A549 (cell line): ENCODE measurements at regions of chr17 and their contacts with region 1.

Region 1: DNA sequence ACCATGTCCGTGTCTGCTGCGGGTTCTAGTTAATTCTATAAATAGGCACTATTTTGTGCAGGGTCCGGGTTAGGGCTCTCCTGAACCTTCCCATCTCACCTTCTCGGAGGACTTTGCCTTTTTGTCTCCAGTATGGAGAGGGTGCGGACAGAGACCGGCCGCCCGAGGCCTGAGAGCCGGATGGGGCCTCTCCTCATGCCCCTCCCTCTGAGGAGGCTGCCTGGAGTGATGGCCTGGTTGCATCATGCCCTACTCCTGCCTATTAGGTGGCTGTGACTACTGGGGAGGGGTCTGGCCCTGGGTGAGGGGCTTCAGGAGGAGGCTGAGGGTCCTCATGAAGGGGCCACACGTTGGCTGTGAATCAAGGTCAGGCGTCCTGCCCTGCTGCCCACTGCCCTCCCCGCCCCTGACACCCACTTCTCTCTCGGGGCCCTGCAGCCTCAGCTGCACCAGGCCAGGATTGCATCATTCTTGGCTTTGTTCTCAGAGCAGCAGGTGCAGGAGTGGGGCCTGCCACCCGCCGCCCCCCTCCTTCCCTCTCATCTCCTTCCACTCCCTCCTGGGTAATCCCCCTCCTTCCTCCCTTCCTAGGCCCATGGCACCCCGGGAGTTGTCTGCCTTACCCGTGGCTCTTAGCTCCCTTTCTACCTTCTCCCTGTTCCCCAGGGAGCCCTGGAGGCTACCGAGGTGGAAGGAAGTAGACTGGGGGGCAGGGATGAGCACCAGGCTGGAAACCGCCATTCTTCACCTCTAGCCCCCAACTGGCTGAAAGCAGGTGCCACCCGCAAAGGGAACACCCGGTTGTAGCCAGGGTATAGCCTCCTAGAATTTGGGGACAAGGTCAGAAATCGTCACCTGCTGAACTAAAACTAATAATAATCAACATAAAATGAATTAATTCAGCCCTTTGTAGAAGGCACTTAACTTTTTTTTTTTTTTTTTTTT is 12.7 kb upstream of the ARHGAP23 start:
- DNase-seq: peak in 1 of 2 experiments; percentile 64
- ATAC-seq: peak; percentile 66 to 75
- H3K4me3 ChIP-seq: peak overlapping the region; percentile 17; the same call in 2 of the 3 replicates
- H3K27ac ChIP-seq: peak overlapping the region; percentile 79 to 91
- H3K4me1 ChIP-seq: peaks cover 17% of the 10 kb centered on the region
- CTCF ChIP-seq: no peak
- EP300 ChIP-seq: peak in 1 of 2 experiments; percentile 26; a peak in 1 of 5 replicates
- POLR2A ChIP-seq: no peak
- RAD21 ChIP-seq: no peak

Region 2: DNA sequence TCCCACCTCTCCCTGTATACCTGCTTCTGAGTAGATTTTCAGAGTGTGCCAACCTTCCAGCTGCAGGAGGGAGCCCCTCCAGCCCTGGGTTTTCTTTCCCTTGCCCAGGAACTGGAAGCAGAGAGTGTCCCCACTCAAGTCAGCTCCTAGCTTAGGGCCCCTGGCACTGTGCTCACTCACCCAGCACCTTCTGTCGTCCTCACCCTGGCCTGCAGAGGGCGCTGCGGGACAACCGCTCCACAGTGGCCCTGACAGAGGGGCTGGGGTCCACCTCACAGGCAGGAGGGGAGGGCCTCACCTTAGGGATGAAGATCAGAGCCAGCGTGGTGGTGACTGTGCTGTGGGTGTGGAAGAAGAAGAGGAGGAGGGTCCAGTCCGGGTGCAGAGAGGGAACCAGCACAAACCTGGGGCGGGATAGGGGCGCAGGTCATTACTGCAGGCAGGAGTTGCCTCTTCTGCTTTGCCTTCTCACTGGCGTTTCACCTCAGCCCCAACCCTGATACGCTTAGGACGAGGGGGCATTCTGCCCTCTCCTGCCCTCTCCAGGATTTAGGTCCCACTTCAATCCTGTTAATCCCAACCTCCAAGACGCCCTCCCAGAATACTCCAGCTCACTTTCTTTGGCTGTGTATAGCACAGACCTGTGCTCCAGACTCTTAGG is 81.8 kb before region 1 on chr17:
- CTCF ChIA-PET with region 1: interaction called, 35 read pairs
- POLR2A ChIA-PET with region 1: no interaction called
- DNase-seq: peak; percentile 44 to 59
- ATAC-seq: peak; percentile 32 to 83; a peak in 4 of 6 replicates
- H3K4me3 ChIP-seq: no peak overlapping the region
- H3K27ac ChIP-seq: no peak overlapping the region
- H3K4me1 ChIP-seq: no peaks in the 10 kb centered on the region
- CTCF ChIP-seq: peak; percentile 63
- EP300 ChIP-seq: no peak
- POLR2A ChIP-seq: no peak
- RAD21 ChIP-seq: peak; percentile 47 to 54; a peak in 3 of 5 replicates

Region 3: GRCh38 chr17:38379438-38379837 is 36.1 kb before region 1 on chr17:
- CTCF ChIA-PET with region 1: interaction called, 22 read pairs
- POLR2A ChIA-PET with region 1: no interaction called
- DNase-seq: no peak
- ATAC-seq: no peak
- H3K4me3 ChIP-seq: no peak overlapping the region
- H3K27ac ChIP-seq: no peak overlapping the region
- H3K4me1 ChIP-seq: no peaks in the 10 kb centered on the region
- CTCF ChIP-seq: no peak
- EP300 ChIP-seq: no peak
- POLR2A ChIP-seq: no peak
- RAD21 ChIP-seq: no peak

Region 4: DNA sequence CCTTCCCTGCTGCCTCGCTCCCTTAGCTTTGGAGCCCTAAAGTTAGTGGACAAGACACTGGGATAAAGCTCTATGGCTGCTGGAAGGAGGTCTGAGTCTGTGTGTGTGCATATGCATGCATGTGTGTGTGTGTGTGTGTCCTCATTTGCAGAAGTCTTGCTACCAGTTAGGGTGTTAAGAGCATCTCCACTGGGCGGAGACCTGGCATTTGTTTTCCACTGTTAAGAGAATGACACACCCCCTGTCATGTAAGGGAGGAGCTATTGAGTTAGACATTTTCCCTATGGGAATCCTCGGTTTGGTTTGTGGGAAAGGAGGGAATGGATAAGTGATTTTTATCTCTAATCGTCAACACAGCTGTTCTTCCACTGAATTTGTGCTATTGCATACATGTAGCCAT is 12.0 kb before region 1 on chr17:
- CTCF ChIA-PET with region 1: interaction called, 38 read pairs
- POLR2A ChIA-PET with region 1: no interaction called
- DNase-seq: peak in 1 of 2 experiments; percentile 56
- ATAC-seq: peak; percentile 56 to 65; a peak in 4 of 6 replicates
- H3K4me3 ChIP-seq: no peak overlapping the region
- H3K27ac ChIP-seq: no peak overlapping the region
- H3K4me1 ChIP-seq: no peaks in the 10 kb centered on the region
- CTCF ChIP-seq: no peak
- EP300 ChIP-seq: no peak
- POLR2A ChIP-seq: no peak
- RAD21 ChIP-seq: no peak

Region 5: GRCh38 chr17:38444151-38444550 is 28.6 kb after region 1 on chr17:
- CTCF ChIA-PET with region 1: interaction called, 173 read pairs
- POLR2A ChIA-PET with region 1: no interaction called
- DNase-seq: peak; percentile 71 to 91
- ATAC-seq: peak; percentile 91 to 97
- H3K4me3 ChIP-seq: no peak overlapping the region
- H3K27ac ChIP-seq: peak overlapping the region in 1 of 2 experiments; percentile 59; a peak in 2 of 6 replicates
- H3K4me1 ChIP-seq: peaks cover 29% of the 10 kb centered on the region
- CTCF ChIP-seq: peak; percentile 96
- EP300 ChIP-seq: no peak
- POLR2A ChIP-seq: no peak
- RAD21 ChIP-seq: peak; percentile 98 to 99

Region 6: GRCh38 chr17:38572669-38573365 is 157.3 kb after region 1 on chr17:
- CTCF ChIA-PET with region 1: no interaction called
- POLR2A ChIA-PET with region 1: no interaction called
- DNase-seq: peak; percentile 23 to 87
- ATAC-seq: peak; percentile 22 to 58; a peak in 5 of 6 replicates
- H3K4me3 ChIP-seq: peak overlapping the region; percentile 61
- H3K27ac ChIP-seq: peak overlapping the region; percentile 53 to 83; a peak in 5 of 6 replicates
- H3K4me1 ChIP-seq: peaks cover 12% of the 10 kb centered on the region
- CTCF ChIP-seq: no peak
- EP300 ChIP-seq: no peak
- POLR2A ChIP-seq: no peak
- RAD21 ChIP-seq: no peak